ENCODE measurements at regions of chr4 and their contacts with region 1.

Region 1: GRCh38 chr4:94621491-94622080 is 136.2 kb upstream of the BMPR1B start:
- DNase-seq: no peak
- ATAC-seq: no peak
- H3K4me3 ChIP-seq: no peak overlapping the region
- H3K27ac ChIP-seq: no peak overlapping the region
- H3K4me1 ChIP-seq: peaks cover 0 to 4% of the 10 kb centered on the region in 2 donors
- H3K27me3 ChIP-seq: no peaks in the 10 kb centered on the region
- CTCF ChIP-seq: peak; percentile 45 to 76 (median 69)
- POLR2A ChIP-seq: no peak

Region 2: GRCh38 chr4:94534401-94535312 is 86.9 kb before region 1 on chr4:
- in situ Hi-C with region 1: no loop called
- intact Hi-C with region 1: no loop called
- DNase-seq: no peak
- ATAC-seq: peak; percentile 78 to 90
- H3K4me3 ChIP-seq: peak overlapping the region in 1 of 4 donors; percentile 3
- H3K27ac ChIP-seq: peak overlapping the region; percentile 68 to 85 (median 82)
- H3K4me1 ChIP-seq: peaks cover 95 to 100% of the 10 kb centered on the region in 2 donors
- H3K27me3 ChIP-seq: no peaks in the 10 kb centered on the region
- CTCF ChIP-seq: no peak
- POLR2A ChIP-seq: no peak

Region 3: GRCh38 chr4:95087657-95088455 is 466.3 kb after region 1 on chr4:
- in situ Hi-C with region 1: loop called in 1 of 4 experiments (anchors 5 kb)
- intact Hi-C with region 1: no loop called
- DNase-seq: no peak
- ATAC-seq: no peak
- H3K4me3 ChIP-seq: no peak overlapping the region
- H3K27ac ChIP-seq: no peak overlapping the region
- H3K4me1 ChIP-seq: peaks cover 9% of the 10 kb centered on the region in 2 donors
- H3K27me3 ChIP-seq: no peaks in the 10 kb centered on the region
- CTCF ChIP-seq: no peak
- POLR2A ChIP-seq: no peak

Region 4: DNA sequence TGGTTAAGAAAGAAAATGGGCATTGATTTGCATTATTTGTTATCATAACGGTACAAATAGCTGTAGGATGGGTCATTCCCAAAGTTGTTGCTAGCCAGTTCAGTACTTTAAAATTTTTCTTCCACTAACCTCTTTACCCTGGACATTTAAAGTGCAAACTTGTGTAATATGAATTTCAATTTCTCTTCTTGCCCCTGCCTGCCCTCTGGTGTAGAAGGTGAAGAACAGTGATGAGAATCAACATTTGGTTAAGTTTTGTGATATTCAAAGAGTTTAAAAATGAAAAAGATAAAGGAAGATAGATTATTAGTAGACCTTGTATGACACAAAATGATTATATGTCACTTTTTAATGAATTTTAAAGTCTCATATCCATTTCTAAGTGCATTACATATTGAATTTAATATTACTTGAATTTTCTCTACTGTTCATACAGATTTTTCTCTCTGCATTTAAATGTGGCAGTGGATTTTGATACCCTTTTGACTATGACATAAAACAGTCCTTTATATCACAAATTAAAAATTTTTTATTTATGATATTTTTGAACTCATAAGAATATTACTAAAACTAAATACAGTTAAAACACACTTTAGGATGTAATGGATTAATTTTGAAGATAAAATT is 473.9 kb after region 1 on chr4:
- in situ Hi-C with region 1: loop called in 3 of 4 experiments (anchors 10 to 25 kb)
- intact Hi-C with region 1: loop called (anchors 5 kb)
- DNase-seq: no peak
- ATAC-seq: peak; percentile 65 to 77
- H3K4me3 ChIP-seq: no peak overlapping the region
- H3K27ac ChIP-seq: no peak overlapping the region
- H3K4me1 ChIP-seq: peaks cover 0 to 6% of the 10 kb centered on the region in 2 donors
- H3K27me3 ChIP-seq: no peaks in the 10 kb centered on the region
- CTCF ChIP-seq: peak; percentile 21 to 66 (median 46)
- POLR2A ChIP-seq: no peak

Region 5: DNA sequence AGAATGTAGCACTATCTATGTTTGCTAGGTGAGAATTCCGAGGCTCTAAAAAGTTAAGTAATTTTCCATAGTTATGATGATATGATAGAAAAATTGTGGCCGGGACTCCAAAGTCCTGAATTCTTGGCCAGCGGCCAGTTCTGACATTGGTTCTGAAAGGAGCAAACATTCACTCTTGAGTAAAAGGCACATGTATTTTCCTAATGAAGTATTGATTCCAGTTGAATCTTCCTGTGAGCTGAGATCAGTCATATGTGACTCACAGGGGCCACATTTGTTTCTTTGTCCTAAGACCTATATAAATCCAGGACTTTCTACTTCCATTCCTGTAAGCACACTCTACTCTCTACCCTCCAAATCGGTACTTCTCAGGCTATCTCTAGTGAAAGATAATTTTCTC is 486.0 kb after region 1 on chr4:
- in situ Hi-C with region 1: loop called in 3 of 4 experiments (anchors 10 to 25 kb)
- intact Hi-C with region 1: no loop called
- DNase-seq: no peak
- ATAC-seq: no peak
- H3K4me3 ChIP-seq: no peak overlapping the region
- H3K27ac ChIP-seq: no peak overlapping the region
- H3K4me1 ChIP-seq: peaks cover 23 to 36% of the 10 kb centered on the region in 2 donors
- H3K27me3 ChIP-seq: no peaks in the 10 kb centered on the region
- CTCF ChIP-seq: no peak
- POLR2A ChIP-seq: no peak

Region 6: GRCh38 chr4:95124906-95125504 is 503.4 kb after region 1 on chr4:
- in situ Hi-C with region 1: loop called in 2 of 4 experiments (anchors 25 kb)
- intact Hi-C with region 1: loop called (anchors 10 kb)
- DNase-seq: no peak
- ATAC-seq: no peak
- H3K4me3 ChIP-seq: no peak overlapping the region
- H3K27ac ChIP-seq: no peak overlapping the region
- H3K4me1 ChIP-seq: no peaks in the 10 kb centered on the region
- H3K27me3 ChIP-seq: no peaks in the 10 kb centered on the region
- CTCF ChIP-seq: peak in 3 of 5 experiments; percentile 28 to 44 (median 30)
- POLR2A ChIP-seq: no peak